ENCODE measurements at regions of chr17 and their contacts with region 1.

Region 1: GRCh38 chr17:46940621-46941404 is 17.9 kb downstream of the GOSR2 start:
- H3K4me3 ChIP-seq: no peak overlapping the region
- H3K27ac ChIP-seq: no peak overlapping the region
- H3K4me1 ChIP-seq: no peaks in the 10 kb centered on the region
- CTCF ChIP-seq: peak; percentile 78

Region 2: DNA sequence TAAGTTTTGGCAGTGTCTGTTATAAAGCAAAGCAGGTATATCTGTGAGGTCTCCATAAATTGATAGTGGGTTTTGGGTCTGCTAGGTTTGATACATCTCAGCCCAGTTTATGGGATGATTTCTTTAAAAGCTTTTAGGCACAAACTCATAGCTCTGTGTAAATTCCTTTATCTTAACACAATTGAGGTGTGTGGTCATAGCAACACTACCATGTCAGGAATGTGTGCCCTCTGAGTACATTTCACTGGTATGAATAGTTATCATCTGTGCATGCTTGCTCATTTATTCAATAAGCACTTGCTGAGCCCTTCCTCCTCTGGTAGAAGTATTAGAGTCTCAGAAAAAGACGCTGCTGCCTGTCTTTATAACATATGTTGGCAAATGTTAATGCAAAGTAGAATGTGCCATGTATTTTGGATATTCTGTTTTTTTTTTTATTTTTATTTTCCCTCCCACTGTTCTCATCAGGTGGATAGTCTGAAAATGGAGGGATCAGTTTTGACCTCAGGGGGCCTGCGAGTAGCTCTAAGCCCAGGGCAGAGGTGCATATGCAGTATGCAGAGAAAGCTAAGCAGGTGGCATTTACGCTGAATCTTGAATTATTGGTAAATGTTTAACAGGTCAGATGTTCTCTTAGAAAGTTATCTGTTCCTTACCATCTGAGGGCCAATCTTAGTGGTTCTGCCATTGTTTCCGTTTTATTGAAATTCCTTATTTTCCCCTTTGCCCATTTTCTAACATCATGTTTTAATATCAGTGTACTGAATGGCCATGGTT is 213.1 kb before region 1 on chr17:
- CTCF ChIA-PET with region 1: no interaction called
- POLR2A ChIA-PET with region 1: no interaction called
- H3K4me3 ChIP-seq: no peak overlapping the region
- H3K27ac ChIP-seq: no peak overlapping the region
- H3K4me1 ChIP-seq: no peaks in the 10 kb centered on the region
- CTCF ChIP-seq: no peak

Region 3: DNA sequence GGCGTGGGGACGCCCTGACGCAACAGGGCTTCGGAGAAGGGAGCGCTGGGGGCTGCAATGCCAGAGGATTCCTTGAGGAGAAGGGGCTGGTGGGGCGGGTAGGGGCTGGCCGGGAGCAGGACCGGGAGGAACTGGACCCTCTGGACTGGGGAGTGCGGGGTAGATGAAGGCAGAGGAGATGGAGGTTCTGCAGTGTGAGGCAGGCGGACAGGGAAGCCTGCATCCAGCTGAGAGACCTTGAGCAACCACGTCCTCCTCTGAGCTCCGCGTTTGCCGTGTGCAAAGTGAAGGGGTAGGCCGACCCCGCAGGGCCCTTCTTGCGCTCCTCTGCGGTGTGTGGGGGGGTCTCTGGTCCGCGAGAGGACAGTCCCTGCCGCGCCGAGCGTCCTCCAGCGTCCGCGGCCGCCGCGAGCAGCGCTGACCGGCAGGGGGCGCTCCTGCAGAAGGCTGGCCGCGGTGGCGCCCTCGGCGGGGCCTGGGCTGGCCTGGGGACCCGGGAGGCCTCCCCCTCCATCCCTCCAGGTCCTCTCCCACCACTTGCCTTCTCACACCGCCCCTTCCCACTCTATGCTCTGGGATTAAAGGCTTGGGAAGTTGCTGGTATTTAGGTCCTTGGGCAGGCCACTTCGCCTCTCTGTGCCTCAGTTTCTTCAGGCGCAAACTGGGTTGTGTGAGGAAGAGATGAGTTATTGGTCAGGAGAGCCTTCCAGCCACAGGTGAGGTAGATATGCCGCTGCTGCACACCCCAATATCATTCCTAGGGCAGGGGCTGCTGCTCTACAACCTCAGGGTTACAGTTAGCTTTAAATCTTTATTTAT is 99.0 kb before region 1 on chr17:
- CTCF ChIA-PET with region 1: interaction called, 94 read pairs
- POLR2A ChIA-PET with region 1: interaction called, 4 read pairs
- H3K4me3 ChIP-seq: no peak overlapping the region
- H3K27ac ChIP-seq: no peak overlapping the region
- H3K4me1 ChIP-seq: no peaks in the 10 kb centered on the region
- CTCF ChIP-seq: no peak

Region 4: DNA sequence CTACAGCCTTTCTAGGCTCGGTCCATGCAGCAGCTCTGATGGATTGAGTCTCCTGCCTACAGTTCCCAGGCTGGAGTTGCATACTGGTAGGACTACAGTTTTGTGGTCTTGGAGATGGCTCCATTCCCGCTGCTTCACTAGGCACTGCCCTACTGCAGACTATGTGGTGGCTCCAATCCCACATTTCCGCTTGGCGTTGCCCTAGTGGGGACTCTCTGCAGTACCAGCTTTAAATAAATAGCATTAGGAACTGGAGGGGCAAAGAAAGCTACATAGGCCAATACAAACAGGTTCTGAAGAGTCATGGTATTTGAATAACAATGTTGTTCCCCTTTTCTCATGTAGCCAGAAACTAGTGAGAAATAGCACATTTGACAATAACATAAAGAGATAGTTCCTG is 23.3 kb before region 1 on chr17:
- CTCF ChIA-PET with region 1: interaction called, 23 read pairs
- POLR2A ChIA-PET with region 1: no interaction called
- H3K4me3 ChIP-seq: no peak overlapping the region
- H3K27ac ChIP-seq: no peak overlapping the region
- H3K4me1 ChIP-seq: no peaks in the 10 kb centered on the region
- CTCF ChIP-seq: no peak

Region 5: GRCh38 chr17:46929413-46929812 is 11.4 kb before region 1 on chr17:
- CTCF ChIA-PET with region 1: interaction called, 54 read pairs
- POLR2A ChIA-PET with region 1: interaction called, 3 read pairs
- H3K4me3 ChIP-seq: no peak overlapping the region
- H3K27ac ChIP-seq: no peak overlapping the region
- H3K4me1 ChIP-seq: peaks cover under 1% of the 10 kb centered on the region; the same call in 1 of the 2 replicates
- CTCF ChIP-seq: no peak

Region 6: GRCh38 chr17:46950997-46951621 is 10.3 kb after region 1 on chr17:
- CTCF ChIA-PET with region 1: interaction called, 36 read pairs
- POLR2A ChIA-PET with region 1: no interaction called
- H3K4me3 ChIP-seq: no peak overlapping the region
- H3K27ac ChIP-seq: no peak overlapping the region
- H3K4me1 ChIP-seq: no peaks in the 10 kb centered on the region
- CTCF ChIP-seq: no peak

Region 7: GRCh38 chr17:46995841-46996571 is 55.2 kb after region 1 on chr17:
- CTCF ChIA-PET with region 1: interaction called, 83 read pairs
- POLR2A ChIA-PET with region 1: no interaction called
- H3K4me3 ChIP-seq: no peak overlapping the region
- H3K27ac ChIP-seq: no peak overlapping the region
- H3K4me1 ChIP-seq: no peaks in the 10 kb centered on the region
- CTCF ChIP-seq: no peak

Region 8: GRCh38 chr17:47218896-47219430 is 278.1 kb after region 1 on chr17:
- CTCF ChIA-PET with region 1: no interaction called
- POLR2A ChIA-PET with region 1: no interaction called
- H3K4me3 ChIP-seq: no peak overlapping the region
- H3K27ac ChIP-seq: no peak overlapping the region
- H3K4me1 ChIP-seq: no peaks in the 10 kb centered on the region
- CTCF ChIP-seq: no peak

Region 9: GRCh38 chr17:47229535-47230443 is 289.0 kb after region 1 on chr17:
- CTCF ChIA-PET with region 1: interaction called, 11 read pairs
- POLR2A ChIA-PET with region 1: no interaction called
- H3K4me3 ChIP-seq: no peak overlapping the region
- H3K27ac ChIP-seq: no peak overlapping the region; the same call in 1 of the 2 replicates
- H3K4me1 ChIP-seq: peaks cover 2% of the 10 kb centered on the region; the same call in 1 of the 2 replicates
- CTCF ChIP-seq: peak; percentile 80

Measured in HEK293 (cell line).